Left lung (tissue), 14 donors: ENCODE measurements at regions of chr11 and their contacts with region 1.

Region 1: DNA sequence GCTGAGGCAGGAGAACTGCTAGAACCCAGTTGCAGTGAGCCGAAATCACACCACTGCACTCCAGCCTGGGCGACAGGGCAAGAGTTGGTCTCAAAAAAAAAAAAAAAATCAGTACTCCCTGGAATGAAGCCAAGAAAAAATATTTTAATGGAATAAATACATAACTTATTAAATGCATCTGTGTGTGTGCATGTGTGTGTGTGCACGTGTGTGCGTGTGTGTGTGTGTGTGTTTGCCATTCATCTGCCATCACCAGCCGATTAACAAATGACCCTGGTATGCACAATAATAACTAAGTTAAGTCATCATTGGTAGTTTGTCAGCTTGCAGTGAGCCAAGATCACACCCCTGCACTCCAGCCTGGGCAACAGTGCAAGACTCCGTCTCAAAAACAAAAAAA is 35.0 kb upstream of the SCGB1A1 start:
- DNase-seq: no peak
- ATAC-seq: no peak
- H3K4me3 ChIP-seq: no peak overlapping the region
- H3K27ac ChIP-seq: no peak overlapping the region
- H3K4me1 ChIP-seq: peaks cover 3 to 10% of the 10 kb centered on the region in 2 donors
- H3K27me3 ChIP-seq: no peaks in the 10 kb centered on the region
- CTCF ChIP-seq: no peak

Region 2: GRCh38 chr11:62694455-62695167 is 310.8 kb after region 1 on chr11:
- intact Hi-C with region 1: loop called in 1 of 2 experiments (anchors 5 kb)
- DNase-seq: peak in 3 of 4 donors; percentile 8 to 83 (median 77)
- ATAC-seq: peak; percentile 92
- H3K4me3 ChIP-seq: no peak overlapping the region
- H3K27ac ChIP-seq: no peak overlapping the region
- H3K4me1 ChIP-seq: peaks cover 0 to 8% of the 10 kb centered on the region in 2 donors
- H3K27me3 ChIP-seq: no peaks in the 10 kb centered on the region
- CTCF ChIP-seq: peak; percentile 74 to 87